MCF 10A (cell line): ENCODE measurements at regions of chr9 and their contacts with region 1.

Region 1: DNA sequence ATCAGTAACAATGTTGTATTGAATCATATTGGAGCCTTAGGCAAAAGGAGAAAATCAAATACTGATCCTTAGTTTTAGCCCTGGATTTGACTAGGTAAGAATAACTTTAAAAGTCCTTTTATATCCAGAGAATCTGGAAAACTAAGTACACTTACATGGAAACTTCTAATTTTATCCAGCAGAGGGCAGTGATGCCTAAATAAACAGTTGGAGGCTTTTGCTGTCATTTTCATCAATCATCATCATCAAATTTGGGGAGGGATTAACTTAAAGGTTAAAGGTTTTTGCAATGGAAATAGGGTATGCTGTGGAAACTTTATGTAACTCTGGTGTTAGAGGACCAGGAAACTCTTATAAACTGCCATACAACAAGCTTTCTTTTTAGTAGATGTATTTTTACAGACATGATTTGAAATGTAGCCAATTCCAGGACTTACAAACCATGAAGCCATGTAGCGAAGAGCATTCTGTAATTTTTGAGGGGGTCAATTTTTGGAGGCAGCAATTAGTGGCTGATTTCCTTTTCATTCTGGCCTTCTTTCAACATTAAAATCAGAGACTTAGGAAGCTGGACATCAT is 112.7 kb downstream of the OSTF1 start:
- DNase-seq: peak; percentile 67
- H3K4me3 Mint-ChIP-seq: no peak overlapping the region
- H3K27ac Mint-ChIP-seq: no peak overlapping the region
- H3K4me1 Mint-ChIP-seq: peaks cover 5% of the 10 kb centered on the region
- H3K27me3 Mint-ChIP-seq: peaks cover 2% of the 10 kb centered on the region
- CTCF ChIP-seq: peak; percentile 61

Region 2: DNA sequence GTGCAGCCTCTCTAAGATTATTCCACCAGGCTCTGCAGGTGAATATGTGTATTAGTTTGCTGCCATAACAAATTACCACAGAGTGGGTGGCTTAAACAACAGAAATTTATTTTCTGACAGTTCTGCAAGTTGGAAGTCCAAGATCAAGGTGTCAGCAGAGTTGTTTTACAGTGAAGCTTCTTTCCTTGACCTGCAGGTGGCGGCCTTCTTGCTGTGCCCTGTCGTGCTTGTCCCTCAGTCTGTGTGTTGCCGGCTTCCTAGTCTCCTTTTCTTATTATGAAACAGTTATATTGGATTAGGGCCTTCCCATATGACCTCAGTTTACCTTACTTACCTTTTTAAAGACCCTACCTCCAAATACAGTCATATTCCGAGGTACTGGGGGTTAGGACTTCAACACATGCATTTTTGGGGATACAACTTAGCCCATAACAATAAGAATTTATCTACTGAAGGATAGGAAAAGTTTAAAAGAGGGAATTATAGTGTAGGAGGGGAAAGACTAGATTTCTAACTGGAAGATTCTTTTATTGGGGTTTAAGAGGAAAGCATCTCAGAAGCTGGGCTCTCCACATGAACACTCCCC is 15.3 kb before region 1 on chr9:
- CTCF ChIA-PET with region 1: interaction called, 22 read pairs
- POLR2A ChIA-PET with region 1: interaction called, 4 read pairs
- intact Hi-C with region 1: no loop called
- DNase-seq: peak; percentile 64
- H3K4me3 Mint-ChIP-seq: no peak overlapping the region
- H3K27ac Mint-ChIP-seq: no peak overlapping the region
- H3K4me1 Mint-ChIP-seq: peaks cover 5% of the 10 kb centered on the region
- H3K27me3 Mint-ChIP-seq: no peaks in the 10 kb centered on the region
- CTCF ChIP-seq: peak; percentile 54

Region 3: DNA sequence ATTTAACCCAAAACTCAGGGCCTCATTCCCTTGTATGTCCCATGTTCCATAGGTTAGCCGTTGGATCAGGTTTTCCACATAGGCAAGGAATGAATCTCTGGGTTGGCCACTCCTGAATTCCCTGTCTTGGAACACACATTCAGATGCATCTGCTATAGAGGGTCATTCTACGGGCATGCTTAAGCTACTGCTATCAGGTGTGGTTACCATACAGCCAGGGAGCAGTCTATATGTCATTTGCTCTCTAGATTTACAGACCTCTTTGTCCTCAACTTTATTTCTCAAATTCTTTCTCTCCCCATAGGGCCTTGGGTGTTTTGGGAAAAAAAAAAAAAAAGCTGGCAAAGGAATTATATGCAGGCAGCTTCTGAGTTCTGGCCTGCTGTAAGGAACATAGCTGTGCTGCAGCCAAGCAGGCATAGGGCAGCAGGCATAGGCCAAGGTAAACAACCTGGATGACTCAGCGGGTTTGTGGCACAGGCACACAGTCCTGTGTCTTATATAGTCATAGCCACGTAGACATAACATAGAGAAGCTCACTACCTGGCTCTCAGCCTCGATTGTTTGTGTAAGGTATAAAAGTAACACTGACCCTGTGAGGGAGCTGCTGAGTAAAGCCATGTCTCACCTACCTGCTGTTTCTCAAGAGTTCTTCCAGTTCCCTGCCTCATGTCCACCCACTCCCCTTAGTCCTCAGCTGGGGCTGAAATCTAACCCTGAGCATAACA is 28.8 kb after region 1 on chr9:
- CTCF ChIA-PET with region 1: interaction called, 109 read pairs
- POLR2A ChIA-PET with region 1: interaction called, 3 read pairs
- intact Hi-C with region 1: no loop called
- DNase-seq: peak; percentile 97
- H3K4me3 Mint-ChIP-seq: no peak overlapping the region
- H3K27ac Mint-ChIP-seq: peak overlapping the region; percentile 72
- H3K4me1 Mint-ChIP-seq: peaks cover 35% of the 10 kb centered on the region
- H3K27me3 Mint-ChIP-seq: no peaks in the 10 kb centered on the region
- CTCF ChIP-seq: no peak

Region 4: GRCh38 chr9:75238311-75238978 is 37.5 kb after region 1 on chr9:
- CTCF ChIA-PET with region 1: interaction called, 109 read pairs
- POLR2A ChIA-PET with region 1: interaction called, 4 read pairs
- intact Hi-C with region 1: loop called (anchors 1 kb)
- DNase-seq: peak; percentile 89
- H3K4me3 Mint-ChIP-seq: no peak overlapping the region
- H3K27ac Mint-ChIP-seq: no peak overlapping the region
- H3K4me1 Mint-ChIP-seq: peaks cover 18% of the 10 kb centered on the region
- H3K27me3 Mint-ChIP-seq: no peaks in the 10 kb centered on the region
- CTCF ChIP-seq: peak; percentile 72

Region 5: GRCh38 chr9:75265525-75265972 is 64.6 kb after region 1 on chr9:
- CTCF ChIA-PET with region 1: interaction called, 10 read pairs
- POLR2A ChIA-PET with region 1: no interaction called
- intact Hi-C with region 1: no loop called
- DNase-seq: peak; percentile 66
- H3K4me3 Mint-ChIP-seq: no peak overlapping the region
- H3K27ac Mint-ChIP-seq: no peak overlapping the region
- H3K4me1 Mint-ChIP-seq: no peaks in the 10 kb centered on the region
- H3K27me3 Mint-ChIP-seq: no peaks in the 10 kb centered on the region
- CTCF ChIP-seq: peak; percentile 75

Region 6: GRCh38 chr9:75866273-75866871 is 665.4 kb after region 1 on chr9:
- CTCF ChIA-PET with region 1: interaction called, 18 read pairs
- POLR2A ChIA-PET with region 1: no interaction called
- intact Hi-C with region 1: loop called (anchors 2 kb)
- DNase-seq: peak; percentile 61
- H3K4me3 Mint-ChIP-seq: no peak overlapping the region
- H3K27ac Mint-ChIP-seq: no peak overlapping the region
- H3K4me1 Mint-ChIP-seq: no peaks in the 10 kb centered on the region
- H3K27me3 Mint-ChIP-seq: no peaks in the 10 kb centered on the region
- CTCF ChIP-seq: peak; percentile 52